ENCODE measurements at regions of chr14 and their contacts with region 1.

Region 1: GRCh38 chr14:50396631-50397390 is at the start of gene CDKL1:
- DNase-seq: peak; percentile 63

Region 2: GRCh38 chr14:50303744-50304471 is 92.9 kb before region 1 on chr14:
- CTCF ChIA-PET with region 1: no interaction called
- POLR2A ChIA-PET with region 1: no interaction called
- DNase-seq: no peak

Region 3: DNA sequence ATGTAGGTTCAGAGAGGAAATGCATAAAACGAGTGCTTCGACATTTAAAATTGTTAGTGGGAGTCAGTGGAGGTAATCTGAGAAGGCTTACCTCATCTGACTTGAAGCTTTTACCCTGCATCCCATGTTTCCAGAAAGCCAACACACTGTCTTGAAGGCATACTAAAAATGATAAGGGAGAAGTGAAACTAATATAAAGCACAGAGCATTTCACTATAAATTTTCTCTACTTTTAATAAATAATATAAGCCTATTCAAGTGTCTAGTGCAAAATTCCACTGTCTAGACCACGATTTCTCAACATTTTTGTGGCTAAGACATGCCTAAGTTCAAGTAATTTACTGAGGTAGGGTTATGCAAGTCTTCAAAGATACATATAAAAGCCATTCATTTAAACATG is 29.0 kb after region 1 on chr14:
- CTCF ChIA-PET with region 1: no interaction called
- POLR2A ChIA-PET with region 1: interaction called, 10 read pairs
- DNase-seq: peak; percentile 36